Head of caudate nucleus (tissue), 42 donors: ENCODE measurements at regions of chr18 and their contacts with region 1.

Region 1: DNA sequence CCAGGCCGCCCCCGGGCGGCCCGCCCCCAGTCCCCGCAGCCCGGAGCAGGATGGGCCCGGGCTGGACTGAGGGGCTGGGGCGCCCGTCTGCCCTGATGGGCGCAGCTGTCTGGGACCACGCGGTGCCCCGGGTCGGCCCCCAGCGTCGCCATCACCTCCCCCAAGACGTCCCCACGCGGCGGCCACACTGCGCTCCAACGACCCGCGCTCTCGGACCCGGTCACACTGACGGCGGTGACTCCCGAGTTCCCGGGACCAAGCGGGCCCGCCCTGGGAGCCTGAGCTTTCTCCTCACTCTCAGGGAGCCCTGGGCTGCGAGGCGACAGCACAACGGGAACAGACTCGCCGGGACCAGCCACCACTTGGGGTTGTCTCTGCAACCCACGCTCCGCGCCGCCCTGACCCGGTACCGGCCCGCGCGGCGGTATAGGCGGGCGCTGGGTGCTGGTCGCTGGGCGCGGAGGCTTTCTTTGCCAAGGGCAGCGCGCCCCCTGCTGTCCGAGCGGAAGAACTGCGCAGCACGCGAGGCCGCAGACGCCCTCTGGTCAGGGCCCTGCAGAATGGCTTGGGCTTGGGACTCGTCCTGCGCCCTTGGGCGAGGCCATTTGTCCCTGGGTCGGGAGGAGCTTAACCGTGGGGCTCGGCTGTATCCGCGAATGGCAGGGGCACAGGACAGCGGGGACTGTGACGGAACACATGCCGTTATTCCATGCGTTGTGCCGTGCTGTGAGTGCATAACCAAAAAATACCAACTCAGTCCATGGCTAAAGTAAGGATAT is 54.8 kb upstream of the ANKRD62 start:
- DNase-seq: peak; percentile 66 to 93 (median 85)

Region 2: DNA sequence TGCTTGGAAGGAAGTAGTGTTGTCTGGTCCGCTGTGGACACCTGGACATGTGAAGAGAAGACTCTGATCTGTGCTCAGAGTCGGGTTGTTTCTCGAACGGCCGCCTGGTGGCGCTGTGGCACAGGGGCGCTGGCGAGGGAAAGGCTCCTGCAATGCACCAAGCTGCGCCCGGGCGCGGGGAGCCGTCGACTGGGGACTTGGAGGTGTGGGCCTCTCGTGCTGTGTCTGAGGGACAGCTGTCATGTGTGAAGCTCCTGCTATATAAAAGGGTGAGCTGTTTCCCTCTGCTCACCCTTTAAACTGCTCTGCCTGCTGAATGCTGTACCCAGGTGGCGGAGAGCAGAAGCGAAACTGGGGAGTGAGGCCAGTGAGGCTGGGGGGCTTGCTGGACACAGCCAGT is 305.8 kb before region 1 on chr18:
- intact Hi-C with region 1: loop called (anchors 10 kb)
- DNase-seq: peak; percentile 58 to 91 (median 82)

Region 3: DNA sequence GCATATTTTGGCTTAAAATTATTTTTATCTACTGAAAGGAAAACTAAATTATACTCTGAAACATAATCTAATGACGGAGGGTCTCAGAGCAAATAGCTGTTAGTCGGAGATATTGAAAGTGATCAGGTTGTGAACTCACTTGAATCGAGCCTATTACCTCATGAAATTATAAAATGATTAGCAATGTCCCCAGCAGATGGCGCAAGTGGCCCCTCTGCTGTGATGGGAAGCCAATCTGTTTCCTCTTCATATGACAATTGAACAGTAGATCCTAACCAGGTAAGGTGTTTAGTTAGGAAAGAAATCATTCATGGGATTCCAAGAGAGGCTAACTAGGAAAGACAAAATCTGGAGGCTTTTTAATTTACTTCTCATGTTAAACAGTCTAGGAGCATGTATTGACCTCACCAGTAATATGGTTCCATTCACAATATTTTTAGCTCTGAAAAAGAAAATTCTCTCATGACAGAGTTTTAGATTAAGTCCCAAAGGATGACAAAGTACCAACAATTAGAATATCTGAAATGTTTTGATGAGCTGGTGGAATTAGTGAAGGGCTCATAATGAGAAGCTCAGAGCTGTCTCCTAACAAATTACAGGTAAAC is 100.9 kb before region 1 on chr18:
- intact Hi-C with region 1: loop called (anchors 2 kb)
- DNase-seq: peak; percentile 37 to 94 (median 82)

Region 4: GRCh38 chr18:12597775-12598174 is 558.9 kb after region 1 on chr18:
- intact Hi-C with region 1: no loop called
- DNase-seq: no peak